ENCODE measurements at regions of chr12 and their contacts with region 1.

Region 1: DNA sequence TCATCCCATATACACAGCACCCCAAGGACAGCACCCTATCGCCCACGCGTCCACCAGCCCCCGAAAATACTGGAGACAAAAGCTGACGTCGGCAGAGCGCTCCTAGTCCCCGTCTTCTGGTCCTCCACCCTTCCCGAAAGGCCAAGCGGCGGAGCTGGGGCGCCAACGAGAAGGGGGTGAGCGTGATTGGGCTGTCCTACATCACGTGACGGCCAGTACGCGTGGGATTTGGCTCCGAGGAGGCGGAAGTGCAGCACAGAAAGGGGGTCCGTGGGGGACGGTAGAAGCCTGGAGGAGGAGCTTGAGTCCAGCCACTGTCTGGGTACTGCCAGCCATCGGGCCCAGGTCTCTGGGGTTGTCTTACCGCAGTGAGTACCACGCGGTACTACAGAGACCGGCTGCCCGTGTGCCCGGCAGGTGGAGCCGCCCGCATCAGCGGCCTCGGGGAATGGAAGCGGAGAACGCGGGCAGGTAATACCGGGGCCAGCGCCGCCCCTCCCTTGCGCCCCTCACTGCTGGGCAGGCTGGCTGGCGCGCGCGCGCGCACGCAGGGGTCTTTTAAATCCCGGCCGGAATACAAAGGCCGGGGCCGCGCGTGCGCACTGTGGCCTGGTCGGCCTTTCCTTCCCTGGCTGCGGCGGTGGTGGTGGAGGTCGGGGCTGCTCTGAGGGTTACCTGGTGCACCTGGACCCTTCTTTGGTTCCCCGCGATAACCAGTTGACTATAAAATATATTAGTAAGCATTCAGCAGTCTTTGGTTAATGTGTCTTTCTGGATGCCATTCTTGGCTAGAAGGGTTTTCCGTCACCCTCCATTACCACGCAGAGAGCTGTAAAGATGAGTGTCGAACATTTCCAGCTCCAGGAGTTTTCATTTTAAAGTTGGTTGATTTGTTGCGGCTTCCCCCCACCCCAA is at the start of gene TDG:
- DNase-seq: peak; percentile 98
- ATAC-seq: peak; percentile 96
- H3K4me3 Mint-ChIP-seq: peak within 1 kb of the TSS; percentile 95
- H3K27ac Mint-ChIP-seq: peak within 1 kb of the TSS; percentile 96
- H3K4me1 Mint-ChIP-seq: peaks cover 49% of the 10 kb centered on the region
- H3K27me3 Mint-ChIP-seq: no peaks in the 10 kb centered on the region
- total RNA-seq, gene TDG: 33.5 to 37.7 TPM

Region 2: GRCh38 chr12:103877934-103878510 is 87.8 kb before region 1 on chr12:
- CTCF ChIA-PET with region 1: interaction called, 15 read pairs
- POLR2A ChIA-PET with region 1: no interaction called
- DNase-seq: peak; percentile 70
- ATAC-seq: peak; percentile 91
- H3K4me3 Mint-ChIP-seq: peak overlapping the region; percentile 6
- H3K27ac Mint-ChIP-seq: no peak overlapping the region
- H3K4me1 Mint-ChIP-seq: peaks cover 36% of the 10 kb centered on the region
- H3K27me3 Mint-ChIP-seq: peaks cover 4% of the 10 kb centered on the region

Region 3: DNA sequence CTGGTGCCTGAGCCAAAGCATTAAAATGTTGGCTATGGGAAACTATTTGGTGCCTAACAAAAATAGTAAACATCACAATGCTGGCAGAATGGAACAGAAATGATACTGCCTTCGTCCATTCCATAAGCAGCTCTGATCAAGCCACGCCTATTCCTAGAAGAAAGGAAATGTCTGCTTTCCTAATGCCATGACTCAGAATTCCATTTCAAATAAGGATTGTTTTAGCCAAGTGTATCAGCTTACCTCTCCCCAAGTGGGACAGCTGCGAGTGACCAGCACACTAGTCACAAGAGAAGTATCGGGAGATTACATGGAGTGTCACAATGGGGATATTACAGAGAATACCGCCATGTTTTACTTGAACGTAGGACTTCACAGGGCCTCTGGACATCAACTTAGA is 45.4 kb after region 1 on chr12:
- CTCF ChIA-PET with region 1: no interaction called
- POLR2A ChIA-PET with region 1: no interaction called
- DNase-seq: no peak
- ATAC-seq: no peak
- H3K4me3 Mint-ChIP-seq: no peak overlapping the region
- H3K27ac Mint-ChIP-seq: no peak overlapping the region
- H3K4me1 Mint-ChIP-seq: no peaks in the 10 kb centered on the region
- H3K27me3 Mint-ChIP-seq: peaks cover 26% of the 10 kb centered on the region

Region 4: GRCh38 chr12:104064031-104064822 is 98.4 kb after region 1 on chr12 and contains the start of gene HCFC2:
- CTCF ChIA-PET with region 1: no interaction called
- POLR2A ChIA-PET with region 1: interaction called, 10 read pairs
- DNase-seq: peak; percentile 91
- ATAC-seq: peak; percentile 95
- H3K4me3 Mint-ChIP-seq: peak within 1 kb of the TSS; percentile 95
- H3K27ac Mint-ChIP-seq: peak within 1 kb of the TSS; percentile 89
- H3K4me1 Mint-ChIP-seq: peaks cover 21% of the 10 kb centered on the region
- H3K27me3 Mint-ChIP-seq: peaks cover 15% of the 10 kb centered on the region
- total RNA-seq, gene HCFC2: 12.0 to 15.3 TPM

Measured in activated CD8-positive, alpha-beta T cell treated with anti-CD3 and anti-CD28 coated beads, Interleukin-2, amount 10 ng/mL, durations not matched to agents 7 days and 5 days (primary cell).